Adrenal gland (tissue), 19 donors: ENCODE measurements at regions of chr17 and their contacts with region 1.

Region 1: DNA sequence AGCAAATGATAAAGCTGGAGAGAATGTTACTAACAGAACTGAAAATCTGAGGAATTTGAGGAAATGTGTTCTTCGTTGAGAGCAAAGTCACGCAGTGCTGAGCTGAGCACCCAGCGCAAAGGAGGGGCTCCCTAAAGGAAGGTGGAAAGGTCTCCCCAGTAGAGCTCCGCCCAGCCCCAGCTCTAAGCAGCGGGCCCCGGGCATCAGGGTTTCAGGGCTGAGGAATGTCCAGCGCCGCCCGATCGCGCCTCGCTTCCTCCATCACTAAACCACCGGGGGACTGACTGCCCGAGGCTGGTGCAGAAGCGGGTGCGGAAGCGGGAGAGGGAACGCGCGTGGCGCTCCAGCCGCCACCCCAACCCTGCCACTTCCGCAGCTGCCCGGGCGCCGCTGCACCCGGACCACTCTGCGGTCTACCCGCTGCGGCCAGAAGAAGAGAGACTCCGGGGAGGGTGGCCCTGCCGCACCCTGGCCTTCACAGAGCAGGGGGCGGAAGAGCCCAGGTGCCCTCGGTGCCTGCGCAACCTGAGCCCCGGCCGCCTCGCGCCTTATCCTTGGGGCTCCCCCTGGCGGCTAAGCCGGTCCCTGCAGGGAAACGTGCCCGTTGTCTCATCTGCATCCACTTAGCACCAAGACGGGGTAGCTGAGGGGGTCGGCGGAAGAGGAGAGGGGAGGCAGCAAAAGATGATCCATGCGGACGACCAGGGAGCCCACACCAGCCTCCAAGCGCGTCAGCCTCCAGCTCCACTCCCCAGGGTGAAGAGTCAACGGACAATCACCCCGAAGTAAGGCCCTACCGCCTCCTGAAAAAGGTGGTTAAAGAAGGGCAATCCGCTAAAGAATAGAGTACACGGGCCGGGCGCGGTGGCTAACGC is 12.4 kb upstream of the GUCY2D start:
- DNase-seq: peak; percentile 64 to 90 (median 84)
- H3K4me3 ChIP-seq: peak overlapping the region in 2 of 4 donors; percentile 40 to 56
- H3K27ac ChIP-seq: peak overlapping the region in 2 of 5 donors; percentile 33 to 51
- H3K4me1 ChIP-seq: peaks cover 0 to 6% of the 10 kb centered on the region in 2 donors
- H3K27me3 ChIP-seq: peaks cover 19% of the 10 kb centered on the region
- CTCF ChIP-seq: peak; percentile 82 to 96 (median 92)
- POLR2A ChIP-seq: no peak

Region 2: GRCh38 chr17:7667656-7668406 is 322.2 kb before region 1 on chr17:
- intact Hi-C with region 1: no loop called
- DNase-seq: no peak
- H3K4me3 ChIP-seq: no peak overlapping the region
- H3K27ac ChIP-seq: no peak overlapping the region
- H3K4me1 ChIP-seq: no peaks in the 10 kb centered on the region
- H3K27me3 ChIP-seq: no peaks in the 10 kb centered on the region
- CTCF ChIP-seq: no peak
- POLR2A ChIP-seq: no peak

Region 3: DNA sequence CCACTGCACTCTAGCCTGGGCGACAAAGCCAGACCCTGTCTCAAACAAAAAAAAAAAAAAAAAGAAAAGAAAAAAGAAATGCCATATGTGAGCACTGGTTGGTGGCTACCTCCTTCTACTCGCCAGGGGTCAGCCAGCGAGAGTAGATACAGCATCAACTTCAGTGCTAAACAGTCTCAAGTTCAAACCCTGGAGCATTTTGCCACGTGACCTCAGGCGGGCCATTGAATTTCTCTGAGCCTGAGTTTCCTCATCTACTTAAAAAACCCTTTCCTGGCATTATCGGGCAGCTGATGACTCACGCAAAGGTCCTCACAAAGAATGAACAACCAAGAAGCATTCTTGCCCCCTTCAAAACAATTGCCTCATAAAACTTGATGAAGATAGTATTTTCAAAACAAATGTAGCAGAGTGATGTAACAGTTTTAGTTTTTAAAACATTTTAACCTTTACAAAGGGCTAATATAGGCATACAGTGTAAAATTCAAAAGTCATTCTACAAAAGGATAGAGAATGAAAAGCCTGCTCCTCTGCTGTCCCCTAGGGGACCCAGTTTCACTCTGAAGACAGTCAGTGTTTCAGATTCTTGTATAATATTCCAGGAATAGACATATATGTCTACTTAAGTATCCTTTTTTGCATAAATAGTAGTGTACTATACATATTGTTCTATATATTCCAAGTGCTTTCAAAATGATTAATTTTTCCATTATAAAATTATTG is 244.1 kb before region 1 on chr17:
- intact Hi-C with region 1: loop called in 1 of 2 experiments (anchors 5 kb)
- DNase-seq: peak in 6 of 7 donors; percentile 43 to 72 (median 62)
- H3K4me3 ChIP-seq: no peak overlapping the region
- H3K27ac ChIP-seq: no peak overlapping the region
- H3K4me1 ChIP-seq: peaks cover 0 to 4% of the 10 kb centered on the region in 2 donors
- H3K27me3 ChIP-seq: peaks cover 5% of the 10 kb centered on the region
- CTCF ChIP-seq: no peak
- POLR2A ChIP-seq: no peak

Region 4: GRCh38 chr17:7823581-7824397 is 166.2 kb before region 1 on chr17:
- intact Hi-C with region 1: loop called in 1 of 2 experiments (anchors 10 kb)
- DNase-seq: no peak
- H3K4me3 ChIP-seq: no peak overlapping the region
- H3K27ac ChIP-seq: no peak overlapping the region
- H3K4me1 ChIP-seq: peaks cover 0 to 10% of the 10 kb centered on the region in 2 donors
- H3K27me3 ChIP-seq: no peaks in the 10 kb centered on the region
- CTCF ChIP-seq: no peak
- POLR2A ChIP-seq: no peak

Region 5: GRCh38 chr17:7851438-7852256 is 138.4 kb before region 1 on chr17:
- intact Hi-C with region 1: loop called in 1 of 2 experiments (anchors 5 kb)
- DNase-seq: peak; percentile 87 to 94 (median 93)
- H3K4me3 ChIP-seq: no peak overlapping the region
- H3K27ac ChIP-seq: peak overlapping the region in 1 of 5 donors; percentile 36
- H3K4me1 ChIP-seq: peaks cover 19 to 38% of the 10 kb centered on the region in 2 donors
- H3K27me3 ChIP-seq: no peaks in the 10 kb centered on the region
- CTCF ChIP-seq: peak; percentile 97 to 99 (median 98)
- POLR2A ChIP-seq: no peak

Region 6: DNA sequence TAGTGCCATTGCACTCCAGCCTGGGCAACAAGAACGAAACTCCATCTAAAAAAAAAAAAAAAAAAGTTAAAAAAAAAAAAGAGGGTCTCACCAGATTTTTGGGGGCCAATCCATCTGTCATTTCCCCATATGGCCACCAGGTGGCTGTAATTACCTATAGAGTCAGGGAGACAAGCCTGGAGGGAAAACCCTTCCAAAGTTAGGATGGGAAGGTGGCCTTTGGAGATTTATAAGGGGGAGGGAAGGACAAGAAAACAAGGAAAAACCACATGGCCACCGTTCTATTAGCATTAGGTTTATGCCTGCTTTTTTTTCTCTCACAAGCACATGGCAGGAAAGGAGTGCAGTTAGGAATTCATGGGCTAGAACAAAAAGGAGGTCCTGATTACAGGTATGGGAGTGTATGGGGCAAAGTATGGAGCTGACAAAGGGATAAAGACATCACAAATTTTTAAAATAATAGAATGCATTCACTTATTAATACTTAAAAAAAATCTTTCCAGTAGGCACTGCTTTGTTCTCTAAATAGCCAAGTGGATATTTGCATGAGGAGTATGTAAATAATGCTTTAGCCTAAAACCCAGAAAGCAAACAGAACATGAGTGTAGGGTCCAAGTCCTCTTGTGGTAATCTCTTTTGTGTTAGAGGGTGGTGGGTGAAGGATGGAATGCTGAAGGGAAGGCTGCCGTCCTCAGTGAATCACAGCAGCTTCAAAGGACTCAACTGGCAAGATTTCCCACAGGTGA is 127.2 kb before region 1 on chr17:
- intact Hi-C with region 1: loop called (anchors 5 kb)
- DNase-seq: peak; percentile 45 to 74 (median 49)
- H3K4me3 ChIP-seq: no peak overlapping the region
- H3K27ac ChIP-seq: no peak overlapping the region
- H3K4me1 ChIP-seq: peaks cover 10 to 11% of the 10 kb centered on the region in 2 donors
- H3K27me3 ChIP-seq: no peaks in the 10 kb centered on the region
- CTCF ChIP-seq: peak; percentile 70 to 94 (median 79)
- POLR2A ChIP-seq: no peak

Region 7: DNA sequence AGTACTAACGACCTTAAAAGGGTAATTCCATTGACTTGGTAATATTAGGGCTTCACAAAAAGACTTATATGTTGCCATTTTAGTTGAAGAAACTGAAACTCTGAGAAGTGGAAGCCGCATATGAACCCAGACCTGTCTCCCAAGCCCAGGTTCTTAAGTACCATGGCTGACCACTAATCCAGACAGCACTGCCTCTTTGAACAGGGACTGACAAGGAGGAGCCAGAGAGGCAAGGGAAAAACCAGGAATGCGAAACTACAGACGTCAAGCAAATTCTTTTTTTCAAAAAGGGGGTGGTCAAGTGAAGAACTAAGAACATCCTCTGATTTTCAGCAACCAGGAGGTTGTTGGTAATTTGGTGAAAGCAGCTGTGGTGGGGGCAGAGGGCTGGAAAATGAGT is 117.0 kb before region 1 on chr17:
- intact Hi-C with region 1: no loop called
- DNase-seq: no peak
- H3K4me3 ChIP-seq: no peak overlapping the region
- H3K27ac ChIP-seq: no peak overlapping the region
- H3K4me1 ChIP-seq: no peaks in the 10 kb centered on the region
- H3K27me3 ChIP-seq: no peaks in the 10 kb centered on the region
- CTCF ChIP-seq: no peak
- POLR2A ChIP-seq: no peak

Region 8: DNA sequence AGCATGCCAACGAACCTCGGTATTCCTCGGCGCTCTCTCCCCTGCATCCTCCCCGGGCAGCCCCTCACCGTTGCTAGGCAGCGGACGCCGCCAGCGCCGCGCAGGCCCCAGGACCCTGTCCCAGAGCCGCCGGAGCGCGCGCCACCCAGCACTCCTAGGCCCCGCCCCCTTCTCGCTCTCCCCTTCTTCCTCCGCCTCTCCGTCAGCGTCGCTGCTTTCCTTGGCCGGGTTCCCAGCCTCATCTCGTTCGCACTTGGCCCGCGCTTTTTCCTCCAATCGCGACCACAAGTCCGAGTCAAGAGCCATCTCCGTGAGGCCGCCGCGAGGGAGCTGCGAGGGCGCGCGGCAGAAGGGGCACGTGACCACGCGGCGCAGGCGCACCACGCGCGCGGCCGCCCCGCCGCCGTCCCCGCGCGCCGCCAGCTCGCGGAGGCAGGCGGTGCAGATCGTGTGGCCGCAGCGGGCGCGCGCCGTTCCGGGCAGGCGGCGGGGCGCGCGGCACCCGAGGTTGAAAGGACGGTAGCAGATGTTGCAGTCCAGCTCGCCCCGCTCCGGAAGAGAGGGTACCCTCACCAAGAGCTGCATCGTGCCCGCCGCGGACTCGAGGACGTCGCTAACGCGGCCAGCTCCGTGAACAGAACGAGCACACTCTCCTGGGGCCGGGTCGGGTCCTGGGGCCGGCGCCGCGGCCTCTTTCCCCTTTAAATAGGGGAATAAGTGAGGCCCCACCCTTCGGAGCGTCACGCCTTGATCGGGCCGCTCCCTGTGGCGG is 74.2 kb before region 1 on chr17 and contains the start of gene RNF227:
- intact Hi-C with region 1: loop called in 1 of 2 experiments (anchors 5 kb)
- DNase-seq: peak; percentile 89 to 96 (median 92)
- H3K4me3 ChIP-seq: peak within 1 kb of the TSS in 3 of 4 donors; percentile 18 to 55 (median 33)
- H3K27ac ChIP-seq: peak within 1 kb of the TSS in 4 of 5 donors; percentile 81 to 96 (median 88)
- H3K4me1 ChIP-seq: peaks cover 10 to 25% of the 10 kb centered on the region in 2 donors
- H3K27me3 ChIP-seq: no peaks in the 10 kb centered on the region
- CTCF ChIP-seq: peak in 1 of 6 experiments; percentile 9
- POLR2A ChIP-seq: peak; percentile 32 to 37
- total RNA-seq, gene RNF227: 1.1 to 17.3 (median 2.9) TPM

Region 9: GRCh38 chr17:7931709-7932482 is 58.1 kb before region 1 on chr17 and contains the starts of genes CNTROB and TRAPPC1:
- intact Hi-C with region 1: loop called in 1 of 2 experiments (anchors 10 kb)
- DNase-seq: peak; percentile 99 to 100 (median 99)
- H3K4me3 ChIP-seq: peak within 1 kb of the TSS; percentile 55 to 95 (median 73)
- H3K27ac ChIP-seq: peak within 1 kb of the TSS in 3 of 5 donors; percentile 52 to 72 (median 64)
- H3K4me1 ChIP-seq: peaks cover 16 to 19% of the 10 kb centered on the region in 2 donors
- H3K27me3 ChIP-seq: no peaks in the 10 kb centered on the region
- CTCF ChIP-seq: no peak
- POLR2A ChIP-seq: peak in 1 of 2 donors; percentile 49
- total RNA-seq, gene CNTROB: 11.8 to 27.1 (median 18.4) TPM
- total RNA-seq, gene TRAPPC1: 32.2 to 161 (median 86.0) TPM